IMR-90 (cell line): ENCODE measurements at regions of chr12 and their contacts with region 1.

Region 1: GRCh38 chr12:50111693-50112455 is at the start of gene COX14:
- DNase-seq: peak; percentile 99
- ATAC-seq: peak; percentile 94
- H3K4me3 ChIP-seq: peak within 1 kb of the TSS; percentile 66
- H3K27ac ChIP-seq: peak within 1 kb of the TSS; percentile 52
- H3K4me1 ChIP-seq: peaks cover 13% of the 10 kb centered on the region
- H3K27me3 ChIP-seq: no peaks in the 10 kb centered on the region
- CTCF ChIP-seq: peak; percentile 94
- POLR2A ChIP-seq: peak; percentile 89
- RAD21 ChIP-seq: peak; percentile 40; the same call in 1 of the 2 replicates
- total RNA-seq, gene COX14: 30.0 and 30.8 TPM in 2 replicates

Region 2: GRCh38 chr12:50084775-50085614 is 26.9 kb before region 1 on chr12 and contains the start of gene SMARCD1:
- CTCF ChIA-PET with region 1: interaction called, 12 read pairs
- POLR2A ChIA-PET with region 1: interaction called, 4 read pairs
- dilution Hi-C with region 1: no loop called
- in situ Hi-C with region 1: no loop called
- intact Hi-C with region 1: no loop called
- DNase-seq: peak; percentile 91
- ATAC-seq: peak; percentile 92
- H3K4me3 ChIP-seq: peak within 1 kb of the TSS; percentile 63
- H3K27ac ChIP-seq: peak within 1 kb of the TSS; percentile 81
- H3K4me1 ChIP-seq: peaks cover 7% of the 10 kb centered on the region
- H3K27me3 ChIP-seq: no peaks in the 10 kb centered on the region
- CTCF ChIP-seq: peak; percentile 72
- POLR2A ChIP-seq: peak; percentile 49; the same call in 1 of the 2 replicates
- RAD21 ChIP-seq: 0 out of 2 replicates have a peak, but pooled peaks have one; percentile 2
- total RNA-seq, gene SMARCD1: 28.1 TPM in 2 replicates

Region 3: GRCh38 chr12:50123203-50123602 is 11.3 kb after region 1 on chr12:
- CTCF ChIA-PET with region 1: interaction called, 13 read pairs
- POLR2A ChIA-PET with region 1: no interaction called
- dilution Hi-C with region 1: no loop called
- in situ Hi-C with region 1: no loop called
- intact Hi-C with region 1: no loop called
- DNase-seq: peak; percentile 15
- ATAC-seq: no peak
- H3K4me3 ChIP-seq: no peak overlapping the region
- H3K27ac ChIP-seq: no peak overlapping the region
- H3K4me1 ChIP-seq: no peaks in the 10 kb centered on the region
- H3K27me3 ChIP-seq: no peaks in the 10 kb centered on the region
- CTCF ChIP-seq: no peak
- POLR2A ChIP-seq: no peak
- RAD21 ChIP-seq: no peak